ENCODE measurements at regions of chr4 and their contacts with region 1.

Region 1: GRCh38 chr4:175947117-175947722 is 118.4 kb upstream of the WDR17 start:
- DNase-seq: peak; percentile 41
- ATAC-seq: no peak
- H3K4me3 ChIP-seq: no peak overlapping the region
- H3K4me3 Mint-ChIP-seq: no peak overlapping the region
- H3K27ac ChIP-seq: no peak overlapping the region
- H3K27ac Mint-ChIP-seq: no peak overlapping the region
- H3K4me1 ChIP-seq: peaks cover 5 to 7% of the 10 kb centered on the region in 2 donors
- H3K4me1 Mint-ChIP-seq: peaks cover 6% of the 10 kb centered on the region
- H3K27me3 ChIP-seq: no peaks in the 10 kb centered on the region
- H3K27me3 Mint-ChIP-seq: peaks cover 4% of the 10 kb centered on the region
- CTCF ChIP-seq: peak; percentile 91

Region 2: GRCh38 chr4:176054942-176055341 is 107.7 kb after region 1 on chr4:
- CTCF ChIA-PET with region 1: interaction called, 3 read pairs
- POLR2A ChIA-PET with region 1: no interaction called
- intact Hi-C with region 1: loop called (anchors 2 kb)
- DNase-seq: peak; percentile 20
- ATAC-seq: no peak
- H3K4me3 ChIP-seq: no peak overlapping the region
- H3K4me3 Mint-ChIP-seq: no peak overlapping the region
- H3K27ac ChIP-seq: no peak overlapping the region
- H3K27ac Mint-ChIP-seq: no peak overlapping the region
- H3K4me1 ChIP-seq: peaks cover 9 to 19% of the 10 kb centered on the region in 2 donors
- H3K4me1 Mint-ChIP-seq: peaks cover 11% of the 10 kb centered on the region
- H3K27me3 ChIP-seq: no peaks in the 10 kb centered on the region
- H3K27me3 Mint-ChIP-seq: peaks cover 3% of the 10 kb centered on the region
- CTCF ChIP-seq: no peak

Region 3: GRCh38 chr4:176277162-176277904 is 330.1 kb after region 1 on chr4:
- CTCF ChIA-PET with region 1: no interaction called
- POLR2A ChIA-PET with region 1: no interaction called
- intact Hi-C with region 1: loop called (anchors 2 kb)
- DNase-seq: peak; percentile 15
- ATAC-seq: no peak
- H3K4me3 ChIP-seq: no peak overlapping the region
- H3K4me3 Mint-ChIP-seq: no peak overlapping the region
- H3K27ac ChIP-seq: no peak overlapping the region
- H3K27ac Mint-ChIP-seq: no peak overlapping the region
- H3K4me1 ChIP-seq: no peaks in the 10 kb centered on the region
- H3K4me1 Mint-ChIP-seq: no peaks in the 10 kb centered on the region
- H3K27me3 ChIP-seq: no peaks in the 10 kb centered on the region
- H3K27me3 Mint-ChIP-seq: peaks cover 35% of the 10 kb centered on the region
- CTCF ChIP-seq: peak; percentile 18